ENCODE measurements at regions of chr10 and their contacts with region 1.

Region 1: DNA sequence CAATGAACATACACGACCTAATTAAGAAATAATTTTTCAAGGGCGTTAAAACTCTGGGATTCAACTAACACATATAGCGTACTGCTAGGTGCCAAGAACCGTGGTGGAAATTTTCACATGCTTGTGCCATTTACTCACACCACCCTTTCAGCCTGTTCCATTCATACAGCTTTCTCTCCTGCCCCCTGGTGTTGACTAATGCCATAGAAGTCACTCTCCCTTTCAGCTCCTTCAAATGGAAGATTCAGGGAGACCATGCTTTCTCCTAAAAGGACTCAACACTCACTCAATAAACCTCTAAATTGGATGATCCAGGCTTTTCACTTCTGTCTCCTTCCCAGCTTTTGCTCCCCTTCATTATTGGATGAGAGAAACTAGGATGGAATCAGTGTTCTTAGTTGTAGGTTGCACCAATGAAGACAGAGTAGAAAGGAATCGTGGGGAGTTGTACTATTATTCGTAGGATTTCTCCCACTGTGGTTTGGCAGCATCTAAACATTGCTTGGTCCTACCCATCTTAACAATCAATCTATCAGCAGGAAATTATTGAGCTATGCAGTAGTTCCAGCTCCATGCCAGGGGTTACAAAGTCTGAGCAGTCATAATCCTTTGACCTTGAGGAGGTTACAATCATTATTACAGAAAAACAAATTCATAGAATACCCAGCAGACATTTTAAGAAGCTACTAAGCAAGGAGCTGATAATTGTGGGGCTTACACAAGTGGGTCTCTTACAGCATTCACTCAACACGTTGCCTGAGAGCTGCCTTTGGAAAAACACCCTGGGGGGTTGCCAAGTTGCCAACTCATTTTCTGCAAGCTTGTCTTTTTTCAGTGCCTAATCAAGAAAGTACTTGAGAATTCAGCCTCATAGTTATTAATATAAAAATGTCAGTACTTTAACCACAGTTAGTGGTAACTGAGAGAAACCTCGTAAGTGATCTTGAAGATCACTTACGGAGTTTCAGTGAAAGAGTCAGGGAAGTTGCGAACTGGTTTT is 2.8 kb upstream of the PPP1R3C start:
- DNase-seq: peak; percentile 80 to 87 (median 82)
- ATAC-seq: peak; percentile 45
- H3K4me3 ChIP-seq: no peak overlapping the region
- H3K27ac ChIP-seq: no peak overlapping the region
- H3K4me1 ChIP-seq: peaks cover 22% of the 10 kb centered on the region
- H3K27me3 ChIP-seq: no peaks in the 10 kb centered on the region
- CTCF ChIP-seq: peak; percentile 56 to 95 (median 91)
- POLR2A ChIP-seq: no peak

Region 2: GRCh38 chr10:91493313-91493712 is 142.4 kb before region 1 on chr10:
- intact Hi-C with region 1: loop called (anchors 5 kb)
- DNase-seq: no peak
- ATAC-seq: no peak
- H3K4me3 ChIP-seq: no peak overlapping the region
- H3K27ac ChIP-seq: no peak overlapping the region
- H3K4me1 ChIP-seq: no peaks in the 10 kb centered on the region
- H3K27me3 ChIP-seq: no peaks in the 10 kb centered on the region
- CTCF ChIP-seq: peak in 6 of 7 experiments; percentile 20 to 73 (median 62)
- POLR2A ChIP-seq: no peak

Region 3: DNA sequence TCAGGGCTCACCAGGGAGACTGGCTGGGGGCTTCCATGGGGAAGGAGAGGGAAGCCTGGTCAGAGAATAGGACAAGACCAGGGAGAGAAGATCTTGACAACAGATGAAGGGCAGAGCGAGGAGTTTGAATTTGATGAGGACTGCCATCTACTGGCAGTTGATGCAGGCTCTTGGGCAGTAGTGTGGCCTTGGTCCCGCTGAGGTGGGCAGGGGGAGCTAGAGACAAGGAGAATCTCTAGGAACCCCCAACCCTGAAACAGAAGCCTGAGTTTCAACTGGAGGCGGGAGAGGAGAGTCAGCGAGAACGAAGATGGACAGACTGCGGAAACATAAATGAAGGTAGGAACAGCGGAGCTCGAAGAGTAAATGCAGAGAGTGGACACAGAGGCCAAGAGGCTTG is 83.8 kb before region 1 on chr10:
- intact Hi-C with region 1: loop called (anchors 5 kb)
- DNase-seq: peak; percentile 55 to 67 (median 62)
- ATAC-seq: peak; percentile 51
- H3K4me3 ChIP-seq: no peak overlapping the region
- H3K27ac ChIP-seq: no peak overlapping the region
- H3K4me1 ChIP-seq: peaks cover 31% of the 10 kb centered on the region
- H3K27me3 ChIP-seq: no peaks in the 10 kb centered on the region
- CTCF ChIP-seq: peak; percentile 44 to 93 (median 70)
- POLR2A ChIP-seq: no peak

Region 4: DNA sequence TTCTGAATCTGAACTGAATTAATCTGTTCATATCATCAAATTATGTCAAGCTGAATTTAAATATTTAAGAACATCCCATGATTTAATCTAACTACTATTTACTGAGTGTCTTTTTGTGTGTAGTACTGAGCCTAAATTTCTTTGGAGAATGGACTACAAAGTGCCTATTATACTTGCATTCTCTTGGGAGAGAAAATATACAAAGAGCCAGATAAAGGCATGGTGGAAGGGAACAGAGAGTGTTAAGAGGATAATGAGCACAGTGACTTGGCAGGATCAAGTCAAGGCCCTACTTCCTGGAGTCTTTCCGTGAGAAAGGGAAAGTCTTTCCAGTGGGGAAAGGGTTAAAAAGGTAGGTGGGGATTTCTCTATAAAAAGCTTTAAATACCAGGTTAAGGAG is 177.6 kb after region 1 on chr10:
- intact Hi-C with region 1: no loop called
- DNase-seq: no peak
- ATAC-seq: no peak
- H3K4me3 ChIP-seq: no peak overlapping the region
- H3K27ac ChIP-seq: no peak overlapping the region
- H3K4me1 ChIP-seq: peaks cover 10% of the 10 kb centered on the region
- H3K27me3 ChIP-seq: no peaks in the 10 kb centered on the region
- CTCF ChIP-seq: no peak
- POLR2A ChIP-seq: no peak

Measured in body of pancreas (tissue), 4 donors.